ENCODE measurements at regions of chr11 and their contacts with region 1.

Region 1: GRCh38 chr11:44658506-44658850 is 68.3 kb upstream of the TSPAN18 start:
- DNase-seq: peak in 5 of 9 donors; percentile 14 to 37 (median 30)
- ATAC-seq: peak; percentile 29
- H3K4me3 ChIP-seq: no peak overlapping the region
- H3K4me3 Mint-ChIP-seq: peak overlapping the region in 1 of 10 donors; percentile 16
- H3K27ac ChIP-seq: no peak overlapping the region
- H3K27ac Mint-ChIP-seq: peak overlapping the region in 2 of 9 donors; percentile 54 to 58
- H3K4me1 ChIP-seq: peaks cover 0 to 15% of the 10 kb centered on the region in 2 donors
- H3K4me1 Mint-ChIP-seq: peaks cover 16 to 32% (median 26%) of the 10 kb centered on the region in 7 donors
- H3K27me3 ChIP-seq: no peaks in the 10 kb centered on the region
- H3K27me3 Mint-ChIP-seq: peaks cover 0 to 24% (median 0%) of the 10 kb centered on the region in 5 donors

Region 2: DNA sequence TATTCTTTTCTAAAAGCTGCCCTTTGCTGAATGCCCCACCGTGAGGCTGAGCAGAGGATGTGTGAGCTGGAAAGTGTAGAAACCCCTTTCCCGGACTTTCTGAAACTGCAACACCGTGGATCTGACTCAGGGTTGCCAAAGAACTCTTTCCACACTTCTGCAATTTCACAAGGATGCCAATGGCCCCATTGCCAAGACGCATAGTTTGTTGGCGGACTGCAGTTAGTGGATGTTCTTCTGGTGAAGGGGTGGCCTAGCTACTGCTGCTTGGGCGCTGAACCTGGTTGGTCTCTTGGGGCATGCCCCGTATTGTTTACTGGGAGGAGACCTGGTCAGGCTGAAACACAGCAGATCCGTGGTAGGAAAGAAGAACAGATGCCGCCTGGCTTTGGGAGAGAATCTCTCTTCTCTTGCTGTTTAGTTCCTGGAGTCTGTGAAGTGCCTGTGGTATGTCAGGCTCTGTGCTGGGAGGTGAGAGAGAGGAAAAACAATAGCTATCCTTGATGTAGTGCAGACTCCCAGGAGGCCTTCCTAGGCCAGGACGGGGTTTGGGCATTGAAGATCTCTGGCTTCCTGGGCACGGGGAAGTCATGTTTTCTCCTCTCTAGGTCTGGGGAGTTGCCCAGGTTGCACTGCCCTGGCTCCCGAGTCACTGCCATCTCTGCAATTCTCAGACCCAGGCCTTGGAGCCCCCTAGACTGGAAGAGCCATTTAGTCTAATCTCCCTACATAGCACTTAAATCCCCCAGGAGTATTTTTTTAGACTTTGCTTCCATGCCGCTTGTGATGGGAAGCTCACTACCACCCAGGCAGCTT is 66.1 kb before region 1 on chr11:
- CTCF ChIA-PET with region 1: no interaction called
- POLR2A ChIA-PET with region 1: no interaction called
- intact Hi-C with region 1: no loop called
- DNase-seq: no peak
- ATAC-seq: peak; percentile 62
- H3K4me3 ChIP-seq: no peak overlapping the region
- H3K4me3 Mint-ChIP-seq: no peak overlapping the region
- H3K27ac ChIP-seq: no peak overlapping the region
- H3K27ac Mint-ChIP-seq: peak overlapping the region; percentile 32 to 90 (median 71)
- H3K4me1 ChIP-seq: peaks cover 30 to 32% of the 10 kb centered on the region in 2 donors
- H3K4me1 Mint-ChIP-seq: peaks cover 24 to 74% (median 66%) of the 10 kb centered on the region in 7 donors
- H3K27me3 ChIP-seq: no peaks in the 10 kb centered on the region
- H3K27me3 Mint-ChIP-seq: no peaks in the 10 kb centered on the region

Region 3: GRCh38 chr11:44893846-44894617 is 235.6 kb after region 1 on chr11:
- CTCF ChIA-PET with region 1: no interaction called
- POLR2A ChIA-PET with region 1: no interaction called
- intact Hi-C with region 1: loop called (anchors 1 kb)
- DNase-seq: peak; percentile 16 to 65 (median 45)
- ATAC-seq: peak; percentile 84
- H3K4me3 ChIP-seq: no peak overlapping the region
- H3K4me3 Mint-ChIP-seq: no peak overlapping the region
- H3K27ac ChIP-seq: no peak overlapping the region
- H3K27ac Mint-ChIP-seq: peak overlapping the region in 1 of 9 donors; percentile 45
- H3K4me1 ChIP-seq: no peaks in the 10 kb centered on the region
- H3K4me1 Mint-ChIP-seq: peaks cover 0 to 12% (median 4%) of the 10 kb centered on the region in 7 donors
- H3K27me3 ChIP-seq: no peaks in the 10 kb centered on the region
- H3K27me3 Mint-ChIP-seq: no peaks in the 10 kb centered on the region